ENCODE measurements at regions of chr3 and their contacts with region 1.

Region 1: DNA sequence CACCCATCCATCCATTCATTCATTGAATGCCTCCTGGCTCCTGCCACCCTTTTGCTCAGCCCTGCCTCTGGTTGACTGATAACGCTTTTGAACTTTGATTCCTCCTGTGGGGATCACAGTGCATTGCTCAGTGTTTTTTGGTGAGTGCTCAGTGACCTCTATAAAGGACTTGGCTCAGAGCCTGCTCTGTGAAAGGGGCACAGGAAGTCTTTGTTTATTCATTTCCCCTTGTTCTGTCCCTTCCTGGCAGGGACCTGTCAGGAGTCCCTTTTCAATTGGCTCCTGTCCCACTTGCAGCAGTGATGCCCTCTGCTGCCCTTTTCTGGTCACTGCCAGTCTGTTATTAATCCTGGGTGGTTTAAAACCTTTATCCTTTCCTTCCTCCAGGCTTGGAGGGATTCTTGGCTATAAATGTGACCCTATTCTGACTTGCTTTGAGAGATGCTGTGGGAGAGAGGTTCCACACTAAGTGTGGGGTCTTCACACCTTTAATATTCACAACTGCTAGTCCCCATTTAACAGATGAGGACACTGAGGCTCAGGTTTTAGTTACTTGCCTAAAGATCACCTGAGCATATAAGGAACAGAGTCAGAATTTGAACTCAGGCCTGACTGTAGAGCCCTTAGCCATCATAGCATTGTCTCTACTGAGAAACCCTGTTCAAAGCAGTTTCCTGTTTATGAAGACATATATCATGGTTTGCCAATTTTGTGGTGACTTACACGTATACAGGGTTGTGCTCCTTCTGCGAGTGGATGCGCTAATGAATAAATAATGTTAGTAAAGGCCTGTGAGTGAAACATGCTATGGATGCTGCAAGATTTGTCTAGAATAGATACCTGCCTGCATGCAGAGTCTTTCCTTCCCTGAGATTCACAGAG is 23.2 kb upstream of the TATDN2 start:
- DNase-seq: peak; percentile 88
- H3K4me3 ChIP-seq: no peak overlapping the region
- H3K27ac ChIP-seq: peak overlapping the region; percentile 84
- H3K4me1 ChIP-seq: peaks cover 86% of the 10 kb centered on the region
- CTCF ChIP-seq: peak; percentile 96

Region 2: DNA sequence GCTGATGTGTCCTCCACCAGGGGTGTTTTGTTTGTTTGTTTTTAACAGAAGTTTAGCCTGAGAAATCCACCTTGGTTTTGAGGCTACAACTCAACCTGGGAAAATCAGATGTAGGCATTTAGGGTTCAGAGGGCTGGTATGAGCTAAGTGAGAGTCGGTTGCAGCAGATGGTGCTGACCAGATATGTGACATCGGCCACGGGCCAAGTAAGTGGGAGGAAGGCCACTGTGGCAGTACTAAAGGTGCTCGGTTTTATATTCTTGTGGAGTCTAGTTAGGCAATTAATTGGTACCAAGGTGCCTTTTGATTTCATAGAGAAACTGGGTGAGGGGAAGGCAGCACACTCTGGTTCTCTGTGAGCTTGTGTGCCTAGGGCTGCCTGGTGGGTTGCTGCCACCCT is 565.2 kb before region 1 on chr3:
- CTCF ChIA-PET with region 1: no interaction called
- POLR2A ChIA-PET with region 1: no interaction called
- intact Hi-C with region 1: no loop called
- DNase-seq: no peak
- H3K4me3 ChIP-seq: no peak overlapping the region
- H3K27ac ChIP-seq: no peak overlapping the region
- H3K4me1 ChIP-seq: peaks cover under 1% of the 10 kb centered on the region
- CTCF ChIP-seq: no peak

Region 3: GRCh38 chr3:9986237-9986725 is 238.7 kb before region 1 on chr3:
- CTCF ChIA-PET with region 1: interaction called, 3 read pairs
- POLR2A ChIA-PET with region 1: interaction called, 8 read pairs
- intact Hi-C with region 1: loop called (anchors 10 kb)
- DNase-seq: no peak
- H3K4me3 ChIP-seq: peak overlapping the region; percentile 96
- H3K27ac ChIP-seq: peak overlapping the region; percentile 81
- H3K4me1 ChIP-seq: peaks cover 19% of the 10 kb centered on the region
- CTCF ChIP-seq: no peak

Region 4: GRCh38 chr3:10010486-10011465 is 214.2 kb before region 1 on chr3:
- CTCF ChIA-PET with region 1: no interaction called
- POLR2A ChIA-PET with region 1: no interaction called
- intact Hi-C with region 1: no loop called
- DNase-seq: peak; percentile 73
- H3K4me3 ChIP-seq: peak overlapping the region; percentile 51
- H3K27ac ChIP-seq: no peak overlapping the region
- H3K4me1 ChIP-seq: peaks cover 23% of the 10 kb centered on the region
- CTCF ChIP-seq: no peak

Region 5: GRCh38 chr3:10142707-10143566 is 82.1 kb before region 1 on chr3:
- CTCF ChIA-PET with region 1: no interaction called
- POLR2A ChIA-PET with region 1: no interaction called
- intact Hi-C with region 1: loop called (anchors 1 kb)
- DNase-seq: peak; percentile 37
- H3K4me3 ChIP-seq: peak overlapping the region; percentile 83
- H3K27ac ChIP-seq: peak overlapping the region; percentile 69
- H3K4me1 ChIP-seq: peaks cover 37% of the 10 kb centered on the region
- CTCF ChIP-seq: no peak

Region 6: GRCh38 chr3:10192953-10193691 is 31.9 kb before region 1 on chr3:
- CTCF ChIA-PET with region 1: interaction called, 6 read pairs
- POLR2A ChIA-PET with region 1: interaction called, 11 read pairs
- intact Hi-C with region 1: loop called (anchors 2 kb)
- DNase-seq: peak; percentile 89
- H3K4me3 ChIP-seq: peak overlapping the region; percentile 40
- H3K27ac ChIP-seq: peak overlapping the region; percentile 74
- H3K4me1 ChIP-seq: peaks cover 81% of the 10 kb centered on the region
- CTCF ChIP-seq: peak; percentile 59

Region 7: GRCh38 chr3:10242182-10243065 is 17.4 kb after region 1 on chr3:
- CTCF ChIA-PET with region 1: interaction called, 5 read pairs
- POLR2A ChIA-PET with region 1: interaction called, 11 read pairs
- intact Hi-C with region 1: no loop called
- DNase-seq: peak; percentile 50
- H3K4me3 ChIP-seq: no peak overlapping the region
- H3K27ac ChIP-seq: no peak overlapping the region
- H3K4me1 ChIP-seq: peaks cover 20% of the 10 kb centered on the region
- CTCF ChIP-seq: no peak

Measured in OCI-LY7 (cell line).